Esophagus muscularis mucosa (tissue), 4 donors: ENCODE measurements at regions of chr5 and their contacts with region 1.

Region 1: GRCh38 chr5:33433303-33434240 is 7.2 kb upstream of the TARS1 start:
- DNase-seq: no peak
- H3K4me3 ChIP-seq: no peak overlapping the region
- H3K27ac ChIP-seq: no peak overlapping the region
- H3K4me1 ChIP-seq: peaks cover 0 to 4% (median 0%) of the 10 kb centered on the region in 4 donors
- H3K27me3 ChIP-seq: no peaks in the 10 kb centered on the region
- CTCF ChIP-seq: no peak
- EP300 ChIP-seq: no peak
- POLR2A ChIP-seq: no peak

Region 2: GRCh38 chr5:33491941-33492340 is 58.4 kb after region 1 on chr5:
- intact Hi-C with region 1: no loop called
- DNase-seq: peak; percentile 14
- H3K4me3 ChIP-seq: no peak overlapping the region
- H3K27ac ChIP-seq: no peak overlapping the region
- H3K4me1 ChIP-seq: peaks cover 0 to 10% (median 6%) of the 10 kb centered on the region in 4 donors
- H3K27me3 ChIP-seq: no peaks in the 10 kb centered on the region
- CTCF ChIP-seq: no peak
- EP300 ChIP-seq: no peak
- POLR2A ChIP-seq: no peak

Region 3: GRCh38 chr5:33726422-33727165 is 293.0 kb after region 1 on chr5:
- intact Hi-C with region 1: no loop called
- DNase-seq: no peak
- H3K4me3 ChIP-seq: no peak overlapping the region
- H3K27ac ChIP-seq: no peak overlapping the region
- H3K4me1 ChIP-seq: peaks cover 0 to 26% (median 23%) of the 10 kb centered on the region in 4 donors
- H3K27me3 ChIP-seq: no peaks in the 10 kb centered on the region
- CTCF ChIP-seq: no peak
- EP300 ChIP-seq: no peak
- POLR2A ChIP-seq: no peak

Region 4: GRCh38 chr5:33934176-33934575 is 500.6 kb after region 1 on chr5:
- intact Hi-C with region 1: loop called (anchors 2 kb)
- DNase-seq: no peak
- H3K4me3 ChIP-seq: no peak overlapping the region
- H3K27ac ChIP-seq: no peak overlapping the region
- H3K4me1 ChIP-seq: peaks cover 9 to 25% (median 17%) of the 10 kb centered on the region in 4 donors
- H3K27me3 ChIP-seq: peaks cover 0 to 45% (median 23%) of the 10 kb centered on the region in 4 donors
- CTCF ChIP-seq: no peak
- EP300 ChIP-seq: no peak
- POLR2A ChIP-seq: no peak